Activated naive CD8-positive, alpha-beta T cell treated with anti-CD3 and anti-CD28 coated beads, Interleukin-2, amount 10 ng/mL, durations not matched to agents 7 days and 5 days (primary cell): ENCODE measurements at regions of chr1 and their contacts with region 1.

Region 1: GRCh38 chr1:12511516-12512468 is 106.2 kb downstream of the DHRS3 start:
- DNase-seq: no peak
- ATAC-seq: no peak
- H3K4me3 Mint-ChIP-seq: peak overlapping the region; percentile 95
- H3K27ac Mint-ChIP-seq: peak overlapping the region; percentile 100
- H3K4me1 Mint-ChIP-seq: peaks cover 36% of the 10 kb centered on the region
- H3K27me3 Mint-ChIP-seq: no peaks in the 10 kb centered on the region

Region 2: DNA sequence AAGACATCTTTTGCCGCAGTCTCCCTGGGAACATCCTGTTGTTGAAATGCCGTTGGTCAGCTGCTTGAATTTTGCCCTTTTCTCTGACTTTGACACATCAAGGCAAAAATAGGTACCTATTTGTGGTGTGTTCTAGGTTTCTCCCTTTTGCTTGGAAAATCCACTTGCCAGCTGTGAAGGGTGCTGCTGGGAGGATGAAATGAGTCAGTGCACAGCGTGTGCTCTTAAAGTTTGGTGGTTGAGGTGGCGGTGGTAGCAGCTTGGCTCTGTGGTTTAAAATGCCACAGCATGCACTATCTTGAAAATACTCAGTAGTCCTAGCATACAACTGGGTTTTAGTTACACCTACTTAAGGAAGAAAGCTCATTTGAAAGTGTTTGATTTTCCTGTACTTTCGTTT is 77.6 kb before region 1 on chr1:
- POLR2A ChIA-PET with region 1: interaction called, 39 read pairs
- DNase-seq: peak; percentile 65
- ATAC-seq: peak; percentile 40
- H3K4me3 Mint-ChIP-seq: peak overlapping the region; percentile 46
- H3K27ac Mint-ChIP-seq: peak overlapping the region; percentile 96
- H3K4me1 Mint-ChIP-seq: peaks cover 74% of the 10 kb centered on the region
- H3K27me3 Mint-ChIP-seq: no peaks in the 10 kb centered on the region

Region 3: DNA sequence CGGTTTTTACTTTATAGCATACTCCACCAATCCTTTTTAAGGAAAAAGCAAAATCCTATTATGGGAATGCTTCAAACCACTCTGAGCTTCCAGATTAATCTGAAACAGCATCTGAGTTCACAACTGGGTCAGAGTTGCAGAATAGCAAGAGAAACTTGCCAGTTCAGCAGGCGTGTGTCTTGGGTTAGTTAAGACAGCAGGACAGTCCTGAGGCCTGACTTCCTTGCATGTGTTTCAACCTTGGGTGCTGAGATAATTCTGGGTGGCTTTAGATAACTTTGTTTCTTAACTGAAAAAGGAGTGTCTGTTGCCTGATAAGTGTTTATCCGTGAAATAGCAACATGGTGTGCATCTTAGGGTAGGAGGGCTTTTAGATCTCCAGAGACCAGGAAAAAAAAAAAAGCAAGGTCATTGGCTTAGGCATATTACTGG is 63.0 kb before region 1 on chr1:
- POLR2A ChIA-PET with region 1: interaction called, 29 read pairs
- DNase-seq: no peak
- ATAC-seq: no peak
- H3K4me3 Mint-ChIP-seq: peak overlapping the region; percentile 84
- H3K27ac Mint-ChIP-seq: peak overlapping the region; percentile 98
- H3K4me1 Mint-ChIP-seq: peaks cover 84% of the 10 kb centered on the region
- H3K27me3 Mint-ChIP-seq: no peaks in the 10 kb centered on the region

Region 4: GRCh38 chr1:12454406-12455391 is 57.1 kb before region 1 on chr1:
- POLR2A ChIA-PET with region 1: interaction called, 29 read pairs
- DNase-seq: no peak
- ATAC-seq: no peak
- H3K4me3 Mint-ChIP-seq: peak overlapping the region; percentile 40
- H3K27ac Mint-ChIP-seq: peak overlapping the region; percentile 98
- H3K4me1 Mint-ChIP-seq: peaks cover 82% of the 10 kb centered on the region
- H3K27me3 Mint-ChIP-seq: no peaks in the 10 kb centered on the region

Region 5: DNA sequence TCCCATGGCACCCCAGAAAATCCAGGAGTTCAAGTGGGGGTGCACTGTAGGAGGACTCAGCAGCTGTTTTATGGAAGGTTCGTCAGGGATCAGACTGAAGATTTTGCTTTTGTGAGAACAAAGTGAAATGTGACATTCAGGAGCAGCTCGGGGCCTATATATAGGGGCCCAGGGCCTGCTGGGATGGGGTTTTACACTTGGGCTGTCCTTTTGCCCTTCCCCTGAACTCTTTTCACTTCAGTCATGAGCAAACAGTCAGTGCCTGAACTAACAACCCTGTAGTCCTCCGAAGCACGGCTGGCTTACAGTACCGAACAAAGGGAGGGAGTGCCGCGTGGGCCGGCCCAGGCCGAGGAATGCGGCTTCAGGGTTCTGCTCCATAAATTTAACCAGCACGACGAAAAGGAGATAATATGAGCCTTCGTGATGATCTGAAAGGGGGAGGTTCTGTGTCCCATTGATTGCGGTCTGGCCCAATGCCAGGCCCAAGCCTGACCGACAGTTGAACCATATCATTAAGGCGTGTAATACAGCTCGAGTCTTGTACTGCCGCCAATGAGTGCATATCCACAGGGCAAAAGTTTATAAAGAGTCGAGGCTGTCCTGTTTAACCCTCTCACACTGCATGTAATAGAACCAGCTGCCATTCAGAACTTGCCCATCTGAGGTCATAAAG is 33.7 kb before region 1 on chr1:
- POLR2A ChIA-PET with region 1: interaction called, 110 read pairs
- DNase-seq: peak; percentile 55
- ATAC-seq: peak; percentile 37
- H3K4me3 Mint-ChIP-seq: peak overlapping the region; percentile 79
- H3K27ac Mint-ChIP-seq: peak overlapping the region; percentile 91
- H3K4me1 Mint-ChIP-seq: peaks cover 86% of the 10 kb centered on the region
- H3K27me3 Mint-ChIP-seq: no peaks in the 10 kb centered on the region

Region 6: GRCh38 chr1:12543747-12544146 is 32.0 kb after region 1 on chr1:
- POLR2A ChIA-PET with region 1: no interaction called
- DNase-seq: no peak
- ATAC-seq: no peak
- H3K4me3 Mint-ChIP-seq: no peak overlapping the region
- H3K27ac Mint-ChIP-seq: no peak overlapping the region
- H3K4me1 Mint-ChIP-seq: peaks cover 1% of the 10 kb centered on the region
- H3K27me3 Mint-ChIP-seq: no peaks in the 10 kb centered on the region